ENCODE measurements at regions of chr18 and their contacts with region 1.

Region 1: DNA sequence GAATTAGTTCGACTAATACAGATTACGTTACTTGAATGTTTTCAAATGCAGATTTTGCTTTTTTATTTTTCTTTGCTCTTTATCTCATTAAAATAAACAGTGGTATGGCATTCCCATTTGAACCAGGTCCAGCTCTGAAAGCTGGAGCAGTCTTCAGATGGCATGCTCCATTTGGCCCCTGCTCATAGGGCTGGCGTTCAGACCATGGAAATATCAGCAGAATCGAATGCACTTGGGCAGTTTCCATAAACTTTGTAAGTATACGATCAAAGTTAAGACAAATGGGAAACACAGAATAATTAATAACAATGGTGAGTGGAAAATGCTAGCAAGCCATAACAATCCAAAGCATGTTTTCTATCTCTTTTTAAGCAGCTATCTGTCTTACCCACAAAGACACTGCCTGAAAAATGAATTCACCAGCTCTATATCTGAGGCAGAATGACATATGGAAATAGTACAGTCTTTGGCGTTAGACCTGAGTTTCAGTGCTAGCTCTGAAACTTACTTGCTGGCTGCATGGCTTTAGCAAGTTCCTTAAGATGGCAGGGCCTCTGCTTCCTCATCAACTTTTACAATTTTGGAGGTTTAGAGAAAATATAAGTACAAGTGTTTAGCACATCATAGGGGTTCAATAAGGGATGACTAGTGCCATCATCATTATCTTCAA is 131.6 kb downstream of the BCL2 start:
- DNase-seq: no peak
- H3K4me3 Mint-ChIP-seq: no peak overlapping the region
- H3K27ac Mint-ChIP-seq: peak overlapping the region; percentile 70
- H3K4me1 Mint-ChIP-seq: peaks cover 66% of the 10 kb centered on the region
- H3K27me3 Mint-ChIP-seq: no peaks in the 10 kb centered on the region

Region 2: GRCh38 chr18:63199743-63200241 is 11.9 kb after region 1 on chr18:
- intact Hi-C with region 1: loop called (anchors 1 kb)
- DNase-seq: peak; percentile 90
- H3K4me3 Mint-ChIP-seq: no peak overlapping the region
- H3K27ac Mint-ChIP-seq: no peak overlapping the region
- H3K4me1 Mint-ChIP-seq: peaks cover 31% of the 10 kb centered on the region
- H3K27me3 Mint-ChIP-seq: no peaks in the 10 kb centered on the region

Region 3: DNA sequence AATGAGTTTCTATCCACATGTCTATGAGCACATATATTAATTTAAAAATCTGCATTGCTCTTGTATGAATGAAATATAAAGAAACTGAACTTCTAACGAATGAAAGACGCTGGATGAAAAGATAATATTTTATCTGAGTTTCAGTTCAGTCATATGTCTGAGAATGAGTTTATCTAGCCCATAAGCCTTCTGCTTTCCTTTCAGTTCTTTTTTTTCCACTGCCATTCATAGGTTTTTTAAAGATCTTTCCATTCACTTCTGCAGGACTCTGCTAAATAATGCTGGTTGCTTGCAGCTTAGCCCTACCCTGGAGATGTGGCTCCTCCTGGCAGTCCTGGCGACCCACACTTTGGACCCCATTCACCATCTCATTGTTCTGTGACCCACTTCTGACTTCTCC is 22.6 kb after region 1 on chr18:
- intact Hi-C with region 1: no loop called
- DNase-seq: peak; percentile 67
- H3K4me3 Mint-ChIP-seq: peak overlapping the region; percentile 85
- H3K27ac Mint-ChIP-seq: peak overlapping the region; percentile 98
- H3K4me1 Mint-ChIP-seq: peaks cover 74% of the 10 kb centered on the region
- H3K27me3 Mint-ChIP-seq: no peaks in the 10 kb centered on the region

Region 4: DNA sequence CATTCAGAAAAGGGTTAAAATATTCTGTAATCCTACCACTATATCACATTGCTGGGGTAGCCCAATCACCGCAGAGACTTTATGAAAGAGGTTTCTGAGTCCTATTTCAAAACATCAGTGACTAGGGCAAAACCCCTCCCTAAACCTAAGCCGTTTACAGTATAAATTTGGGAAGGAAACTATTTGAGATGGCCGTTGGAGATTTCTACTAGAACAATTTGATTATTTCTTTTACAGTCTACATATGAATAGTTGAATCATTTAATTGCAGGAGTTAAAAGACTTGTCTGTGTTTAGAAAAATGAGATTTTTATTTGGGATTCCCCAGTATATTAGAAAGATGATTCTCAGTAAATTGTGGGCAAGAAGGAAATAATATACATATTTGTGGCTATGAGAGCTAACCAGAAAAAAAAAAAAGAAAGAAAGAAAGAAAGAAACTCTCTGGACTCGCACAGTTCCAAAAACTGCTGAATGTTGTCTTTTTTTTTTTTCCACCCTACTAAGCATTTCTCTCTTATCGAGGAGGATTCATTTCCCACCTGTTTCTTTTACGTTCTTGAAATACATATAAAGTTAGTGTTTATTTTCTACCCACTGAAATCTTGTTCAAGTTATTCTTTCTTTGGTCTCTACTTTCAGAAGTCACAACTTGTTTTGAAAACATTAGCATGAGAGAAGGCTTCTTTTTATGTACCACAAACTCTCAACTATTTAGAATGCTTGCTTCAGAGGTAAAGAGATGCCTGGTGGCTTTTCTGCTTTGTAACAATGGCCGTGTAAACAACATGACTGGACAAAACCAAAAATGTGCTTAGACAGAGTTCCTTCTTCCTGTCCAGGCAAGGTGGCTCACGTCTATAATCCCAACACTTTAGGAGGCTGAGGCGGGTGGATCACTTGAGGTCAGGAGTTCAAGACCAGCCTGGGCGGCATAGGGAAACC is 65.8 kb after region 1 on chr18:
- intact Hi-C with region 1: no loop called
- DNase-seq: no peak
- H3K4me3 Mint-ChIP-seq: peak overlapping the region; percentile 29
- H3K27ac Mint-ChIP-seq: peak overlapping the region; percentile 64
- H3K4me1 Mint-ChIP-seq: peaks cover 68% of the 10 kb centered on the region
- H3K27me3 Mint-ChIP-seq: no peaks in the 10 kb centered on the region